Mammary epithelial cell (primary cell): ENCODE measurements at regions of chr15 and their contacts with region 1.

Region 1: DNA sequence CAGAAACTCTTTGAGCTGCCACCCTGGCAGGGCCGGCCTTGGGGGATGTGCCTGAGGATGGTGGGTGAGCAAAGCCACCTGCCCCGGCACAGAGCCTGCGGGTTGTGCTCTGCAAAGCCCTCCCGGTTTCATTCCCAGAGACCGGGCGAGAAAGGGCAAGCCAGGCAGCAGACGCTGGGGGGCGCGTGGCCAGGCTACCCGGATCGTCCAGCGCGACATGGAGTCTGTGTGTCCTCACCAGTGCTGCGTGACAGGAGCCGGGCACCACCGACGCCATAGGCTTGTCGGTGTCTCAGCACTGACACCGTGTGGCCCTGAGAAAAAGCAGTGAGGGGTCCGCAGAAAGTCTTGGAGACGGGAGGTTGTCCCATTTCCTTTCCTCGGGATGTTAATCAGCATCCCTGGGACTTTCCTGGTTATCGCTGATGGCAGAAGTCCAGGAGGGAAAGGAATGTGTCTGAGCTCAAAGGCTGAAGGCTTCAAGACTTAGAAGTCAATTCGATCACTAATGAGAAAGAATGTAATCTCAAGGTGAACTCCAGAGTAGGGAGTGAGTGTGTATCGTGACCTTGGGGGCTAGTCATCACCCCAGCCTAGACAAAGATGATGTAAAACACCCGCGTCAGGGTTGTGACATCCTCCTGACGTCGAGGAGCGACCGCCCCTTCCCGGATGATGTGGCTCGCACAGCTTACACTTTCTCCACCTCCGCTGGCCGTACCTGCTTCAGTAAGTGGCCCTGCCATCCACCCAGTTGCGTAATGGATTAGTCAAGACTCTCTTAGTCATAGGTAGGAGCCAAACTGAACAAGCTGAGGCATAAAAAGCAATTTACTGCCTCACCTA is 36.3 kb upstream of the PLA2G4E start:
- DNase-seq: peak; percentile 100
- H3K4me3 ChIP-seq: peak overlapping the region; percentile 36 to 52 (median 50)
- H3K27ac ChIP-seq: peak overlapping the region; percentile 93
- H3K4me1 ChIP-seq: peaks cover 19% of the 10 kb centered on the region
- H3K27me3 ChIP-seq: no peaks in the 10 kb centered on the region
- CTCF ChIP-seq: peak; percentile 43 to 77

Region 2: GRCh38 chr15:41930221-41930866 is 126.8 kb before region 1 on chr15:
- CTCF ChIA-PET with region 1: no interaction called
- dilution Hi-C with region 1: no loop called
- in situ Hi-C with region 1: no loop called
- intact Hi-C with region 1: loop called (anchors 1 kb)
- DNase-seq: peak; percentile 89
- H3K4me3 ChIP-seq: no peak overlapping the region
- H3K27ac ChIP-seq: peak overlapping the region; percentile 79
- H3K4me1 ChIP-seq: peaks cover 71% of the 10 kb centered on the region
- H3K27me3 ChIP-seq: no peaks in the 10 kb centered on the region
- CTCF ChIP-seq: peak; percentile 39 to 58

Region 3: GRCh38 chr15:41972253-41973242 is 84.6 kb before region 1 on chr15 and contains the start of gene EHD4:
- CTCF ChIA-PET with region 1: no interaction called
- dilution Hi-C with region 1: no loop called
- in situ Hi-C with region 1: no loop called
- intact Hi-C with region 1: loop called (anchors 1 kb)
- DNase-seq: peak; percentile 99
- H3K4me3 ChIP-seq: peak within 1 kb of the TSS; percentile 87 to 98 (median 98)
- H3K27ac ChIP-seq: peak within 1 kb of the TSS; percentile 74
- H3K4me1 ChIP-seq: peaks cover 37% of the 10 kb centered on the region
- H3K27me3 ChIP-seq: no peaks in the 10 kb centered on the region
- CTCF ChIP-seq: peak in 1 of 2 donors; percentile 50
- total RNA-seq, gene EHD4: 53.6 to 65.0 TPM

Region 4: GRCh38 chr15:41989259-41989933 is 67.8 kb before region 1 on chr15:
- CTCF ChIA-PET with region 1: no interaction called
- dilution Hi-C with region 1: no loop called
- in situ Hi-C with region 1: loop called (anchors 5 kb)
- intact Hi-C with region 1: loop called (anchors 1 kb)
- DNase-seq: peak; percentile 53
- H3K4me3 ChIP-seq: no peak overlapping the region
- H3K27ac ChIP-seq: no peak overlapping the region
- H3K4me1 ChIP-seq: no peaks in the 10 kb centered on the region
- H3K27me3 ChIP-seq: no peaks in the 10 kb centered on the region
- CTCF ChIP-seq: peak; percentile 98 to 99

Region 5: DNA sequence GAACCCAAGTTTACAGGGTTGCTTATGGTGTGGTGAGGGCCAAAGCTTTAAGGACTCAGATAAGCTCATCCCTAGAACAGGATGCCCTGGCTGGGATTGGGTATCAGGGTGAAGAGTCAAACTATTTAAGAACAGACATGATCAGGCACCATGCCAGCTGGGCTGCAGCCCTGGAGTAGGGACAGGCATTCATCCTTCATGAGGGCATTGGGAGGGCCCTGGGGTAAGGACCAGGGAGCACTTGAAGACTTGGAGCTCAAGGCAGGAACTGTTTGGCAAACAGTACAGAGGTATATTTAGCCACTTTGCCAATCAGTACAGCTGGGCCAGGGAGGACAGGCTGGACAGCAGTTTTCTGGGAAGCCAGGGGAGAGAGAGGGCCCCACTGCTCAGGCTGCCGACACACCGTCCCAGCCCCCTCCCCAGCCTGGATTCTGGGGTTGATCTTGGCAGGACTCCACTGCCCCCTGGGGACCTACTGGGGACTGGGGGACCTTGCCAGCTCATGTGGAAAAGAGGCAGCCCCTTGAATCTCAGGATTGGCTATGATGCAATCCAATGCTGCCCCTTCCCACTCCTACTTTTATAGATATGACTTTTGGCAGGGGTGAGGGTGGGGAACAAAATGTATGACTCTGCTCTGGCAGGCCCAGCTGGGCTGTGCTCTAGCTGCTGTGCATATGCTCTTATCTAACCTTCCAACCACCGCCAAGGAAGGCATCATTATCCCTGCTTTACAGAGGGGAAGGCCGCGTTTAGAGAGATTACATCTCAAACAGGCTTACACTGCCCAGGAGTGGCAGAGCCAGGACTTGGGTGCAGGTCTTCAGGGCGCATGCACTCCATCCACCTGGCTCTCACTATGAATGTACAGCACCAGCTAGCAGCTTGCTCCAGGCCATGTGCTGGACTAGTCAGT is 38.6 kb before region 1 on chr15:
- CTCF ChIA-PET with region 1: no interaction called
- dilution Hi-C with region 1: no loop called
- in situ Hi-C with region 1: no loop called
- intact Hi-C with region 1: no loop called
- DNase-seq: no peak
- H3K4me3 ChIP-seq: no peak overlapping the region
- H3K27ac ChIP-seq: no peak overlapping the region
- H3K4me1 ChIP-seq: peaks cover 3% of the 10 kb centered on the region
- H3K27me3 ChIP-seq: no peaks in the 10 kb centered on the region
- CTCF ChIP-seq: no peak

Region 6: DNA sequence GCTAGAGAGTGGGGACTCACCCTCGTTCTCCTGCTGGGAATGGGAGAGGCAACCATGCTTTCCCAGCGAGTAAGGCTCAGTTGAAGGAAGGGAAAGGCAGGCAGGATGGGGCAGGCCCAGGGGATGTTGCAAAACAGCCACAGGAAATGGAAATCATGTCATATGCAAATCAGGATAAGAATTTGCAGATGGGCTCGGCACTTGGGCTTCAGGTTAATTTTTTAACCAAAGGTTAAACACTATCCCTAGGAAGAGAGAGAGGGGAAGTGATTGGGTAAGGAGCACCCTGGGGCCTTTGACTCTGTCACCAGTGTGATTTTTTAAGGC is 21.8 kb before region 1 on chr15:
- CTCF ChIA-PET with region 1: no interaction called
- dilution Hi-C with region 1: no loop called
- in situ Hi-C with region 1: no loop called
- intact Hi-C with region 1: loop called (anchors 1 kb)
- DNase-seq: peak; percentile 80
- H3K4me3 ChIP-seq: peak overlapping the region in 2 of 3 experiments; percentile 0 to 4
- H3K27ac ChIP-seq: peak overlapping the region; percentile 54
- H3K4me1 ChIP-seq: peaks cover 39% of the 10 kb centered on the region
- H3K27me3 ChIP-seq: no peaks in the 10 kb centered on the region
- CTCF ChIP-seq: no peak

Region 7: DNA sequence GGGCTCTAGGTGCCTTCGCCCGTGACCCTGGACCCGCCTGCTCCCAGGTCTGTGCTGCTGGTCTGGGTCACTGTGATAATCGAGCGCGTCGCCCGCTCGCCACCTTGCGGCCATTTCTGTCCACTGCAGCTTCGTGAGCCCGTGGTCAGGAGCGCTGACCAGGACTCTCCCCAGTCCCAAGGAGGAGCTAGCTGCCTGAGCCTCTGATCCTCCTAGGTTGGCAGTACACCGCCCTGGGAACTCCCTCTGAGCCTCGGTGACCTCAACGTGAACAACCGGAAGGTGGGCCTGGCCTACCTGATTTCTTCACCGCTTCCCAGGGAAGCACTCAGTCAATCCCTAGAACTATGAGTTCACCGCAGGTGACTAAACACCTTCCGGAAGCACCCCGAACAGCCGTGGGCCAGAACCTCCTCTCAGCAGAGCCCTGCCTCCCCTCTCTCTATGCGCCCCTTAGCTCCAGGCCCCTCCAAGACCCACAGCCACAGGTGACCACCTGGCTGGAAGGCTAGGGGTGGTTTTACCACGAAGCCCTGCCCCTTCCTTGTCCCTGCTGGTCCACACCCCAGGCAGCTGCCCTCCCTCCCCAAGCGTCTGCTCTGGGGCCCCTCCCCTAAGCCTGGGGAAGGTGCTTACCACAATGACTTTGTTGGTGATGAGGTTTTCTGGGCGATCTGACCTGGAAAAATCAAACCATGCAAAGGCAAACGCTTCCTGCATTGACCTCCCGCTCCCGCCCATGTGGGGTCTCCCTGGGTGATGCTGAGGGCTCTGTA is 27.5 kb after region 1 on chr15:
- CTCF ChIA-PET with region 1: no interaction called
- dilution Hi-C with region 1: no loop called
- in situ Hi-C with region 1: no loop called
- intact Hi-C with region 1: loop called (anchors 1 kb)
- DNase-seq: peak; percentile 94
- H3K4me3 ChIP-seq: no peak overlapping the region
- H3K27ac ChIP-seq: peak overlapping the region; percentile 42
- H3K4me1 ChIP-seq: peaks cover 24% of the 10 kb centered on the region
- H3K27me3 ChIP-seq: no peaks in the 10 kb centered on the region
- CTCF ChIP-seq: peak; percentile 86 to 91

Region 8: GRCh38 chr15:42118650-42119445 is 61.7 kb after region 1 on chr15:
- CTCF ChIA-PET with region 1: no interaction called
- dilution Hi-C with region 1: loop called (anchors 10 kb)
- in situ Hi-C with region 1: no loop called
- intact Hi-C with region 1: no loop called
- DNase-seq: no peak
- H3K4me3 ChIP-seq: no peak overlapping the region
- H3K27ac ChIP-seq: no peak overlapping the region
- H3K4me1 ChIP-seq: no peaks in the 10 kb centered on the region
- H3K27me3 ChIP-seq: no peaks in the 10 kb centered on the region
- CTCF ChIP-seq: no peak

Region 9: GRCh38 chr15:42270551-42270950 is 213.4 kb after region 1 on chr15:
- CTCF ChIA-PET with region 1: no interaction called
- dilution Hi-C with region 1: no loop called
- in situ Hi-C with region 1: no loop called
- intact Hi-C with region 1: no loop called
- DNase-seq: peak; percentile 5
- H3K4me3 ChIP-seq: peak overlapping the region in 2 of 3 experiments; percentile 72 to 78
- H3K27ac ChIP-seq: peak overlapping the region; percentile 72
- H3K4me1 ChIP-seq: peaks cover 12% of the 10 kb centered on the region
- H3K27me3 ChIP-seq: no peaks in the 10 kb centered on the region
- CTCF ChIP-seq: no peak

Region 10: GRCh38 chr15:42623951-42624350 is 566.8 kb after region 1 on chr15:
- CTCF ChIA-PET with region 1: no interaction called
- dilution Hi-C with region 1: no loop called
- in situ Hi-C with region 1: no loop called
- intact Hi-C with region 1: no loop called
- DNase-seq: no peak
- H3K4me3 ChIP-seq: no peak overlapping the region
- H3K27ac ChIP-seq: no peak overlapping the region
- H3K4me1 ChIP-seq: no peaks in the 10 kb centered on the region
- H3K27me3 ChIP-seq: no peaks in the 10 kb centered on the region
- CTCF ChIP-seq: no peak